ENCODE measurements at regions of chr2 and their contacts with region 1.

Region 1: GRCh38 chr2:40546439-40547191 is 94.7 kb upstream of the SLC8A1 start:
- DNase-seq: no peak
- ATAC-seq: no peak
- H3K4me3 ChIP-seq: no peak overlapping the region
- H3K27ac ChIP-seq: no peak overlapping the region
- H3K4me1 ChIP-seq: no peaks in the 10 kb centered on the region
- H3K27me3 ChIP-seq: no peaks in the 10 kb centered on the region

Region 2: GRCh38 chr2:40192908-40193307 is 353.7 kb before region 1 on chr2:
- intact Hi-C with region 1: loop called in 1 of 2 experiments (anchors 10 kb)
- DNase-seq: no peak
- ATAC-seq: no peak
- H3K4me3 ChIP-seq: no peak overlapping the region
- H3K27ac ChIP-seq: no peak overlapping the region
- H3K4me1 ChIP-seq: no peaks in the 10 kb centered on the region
- H3K27me3 ChIP-seq: no peaks in the 10 kb centered on the region

Measured in aorta (tissue), 5 donors.